ENCODE measurements at regions of chr19 and their contacts with region 1.

Region 1: GRCh38 chr19:47436712-47437401 is 17.5 kb upstream of the MEIS3 start:
- DNase-seq: peak; percentile 68 to 86 (median 78)
- H3K4me3 ChIP-seq: no peak overlapping the region
- H3K4me3 Mint-ChIP-seq: peak overlapping the region in 4 of 7 donors; percentile 0 to 76 (median 25)
- H3K27ac ChIP-seq: no peak overlapping the region
- H3K27ac Mint-ChIP-seq: peak overlapping the region in 1 of 8 donors; percentile 65
- H3K4me1 ChIP-seq: peaks cover 5% of the 10 kb centered on the region
- H3K4me1 Mint-ChIP-seq: peaks cover 15 to 23% (median 20%) of the 10 kb centered on the region in 3 donors
- H3K27me3 ChIP-seq: peaks cover 13% of the 10 kb centered on the region
- H3K27me3 Mint-ChIP-seq: peaks cover 42 to 73% of the 10 kb centered on the region in 2 donors

Region 2: GRCh38 chr19:47697863-47698609 is 261.2 kb after region 1 on chr19:
- CTCF ChIA-PET with region 1: interaction called, 179 read pairs
- POLR2A ChIA-PET with region 1: no interaction called
- DNase-seq: peak; percentile 30 to 65 (median 36)
- H3K4me3 ChIP-seq: no peak overlapping the region
- H3K4me3 Mint-ChIP-seq: no peak overlapping the region
- H3K27ac ChIP-seq: no peak overlapping the region
- H3K27ac Mint-ChIP-seq: peak overlapping the region in 2 of 8 donors; percentile 61 to 82
- H3K4me1 ChIP-seq: no peaks in the 10 kb centered on the region
- H3K4me1 Mint-ChIP-seq: peaks cover 0 to 8% (median 0%) of the 10 kb centered on the region in 3 donors
- H3K27me3 ChIP-seq: no peaks in the 10 kb centered on the region
- H3K27me3 Mint-ChIP-seq: peaks cover 0 to 1% of the 10 kb centered on the region in 2 donors

Region 3: GRCh38 chr19:47745010-47745901 is 308.4 kb after region 1 on chr19 and contains the start of gene NOP53:
- CTCF ChIA-PET with region 1: interaction called, 20 read pairs
- POLR2A ChIA-PET with region 1: no interaction called
- DNase-seq: peak; percentile 94 to 98 (median 97)
- H3K4me3 ChIP-seq: peak within 1 kb of the TSS; percentile 81
- H3K4me3 Mint-ChIP-seq: peak within 1 kb of the TSS; percentile 90 to 100 (median 100)
- H3K27ac ChIP-seq: peak within 1 kb of the TSS; percentile 92
- H3K27ac Mint-ChIP-seq: peak within 1 kb of the TSS; percentile 89 to 100 (median 99)
- H3K4me1 ChIP-seq: peaks cover 48% of the 10 kb centered on the region
- H3K4me1 Mint-ChIP-seq: peaks cover 25 to 43% (median 35%) of the 10 kb centered on the region in 3 donors
- H3K27me3 ChIP-seq: no peaks in the 10 kb centered on the region
- H3K27me3 Mint-ChIP-seq: peaks cover 0 to 2% of the 10 kb centered on the region in 2 donors
- total RNA-seq, gene NOP53: 236 to 243 TPM

Measured in CD8-positive, alpha-beta memory T cell (primary cell).